MCF 10A (cell line): ENCODE measurements at regions of chr3 and their contacts with region 1.

Region 1: DNA sequence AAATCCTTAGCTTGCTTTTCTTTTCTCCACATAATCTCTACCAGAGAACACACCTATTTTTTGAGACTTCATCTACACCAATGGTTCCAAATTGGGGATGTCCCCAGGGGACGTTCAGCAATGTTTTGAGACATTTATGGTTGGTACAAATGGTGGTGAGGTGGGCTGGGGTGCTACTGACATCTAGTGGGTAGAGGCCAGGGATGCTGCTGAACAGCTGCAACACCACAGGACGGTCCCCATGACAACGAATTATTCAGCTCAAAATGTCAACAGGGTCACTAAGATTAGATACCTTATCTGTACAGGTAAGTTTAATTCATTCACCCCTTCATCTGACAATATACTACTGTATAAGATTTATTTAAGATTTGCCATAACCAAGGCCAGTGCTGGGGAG is 14.3 kb downstream of the GK5 start:
- DNase-seq: no peak
- H3K4me3 Mint-ChIP-seq: no peak overlapping the region
- H3K27ac Mint-ChIP-seq: peak overlapping the region; percentile 99
- H3K4me1 Mint-ChIP-seq: peaks cover 25% of the 10 kb centered on the region
- H3K27me3 Mint-ChIP-seq: no peaks in the 10 kb centered on the region
- CTCF ChIP-seq: peak; percentile 10

Region 2: DNA sequence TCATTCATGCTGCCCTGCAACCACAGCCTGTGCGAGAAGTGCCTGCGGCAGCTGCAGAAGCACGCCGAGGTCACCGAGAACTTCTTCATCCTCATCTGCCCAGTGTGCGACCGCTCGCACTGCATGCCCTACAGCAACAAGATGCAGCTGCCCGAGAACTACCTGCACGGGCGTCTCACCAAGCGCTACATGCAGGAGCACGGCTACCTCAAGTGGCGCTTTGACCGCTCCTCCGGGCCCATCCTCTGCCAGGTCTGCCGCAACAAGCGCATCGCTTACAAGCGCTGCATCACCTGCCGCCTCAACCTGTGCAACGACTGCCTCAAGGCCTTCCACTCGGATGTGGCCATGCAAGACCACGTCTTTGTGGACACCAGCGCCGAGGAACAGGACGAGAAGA is 1528.4 kb before region 1 on chr3:
- CTCF ChIA-PET with region 1: no interaction called
- POLR2A ChIA-PET with region 1: no interaction called
- intact Hi-C with region 1: no loop called
- DNase-seq: no peak
- H3K4me3 Mint-ChIP-seq: no peak overlapping the region
- H3K27ac Mint-ChIP-seq: no peak overlapping the region
- H3K4me1 Mint-ChIP-seq: no peaks in the 10 kb centered on the region
- H3K27me3 Mint-ChIP-seq: no peaks in the 10 kb centered on the region
- CTCF ChIP-seq: no peak

Region 3: GRCh38 chr3:142148792-142149672 is 62.0 kb before region 1 on chr3 and contains the start of gene TFDP2:
- CTCF ChIA-PET with region 1: no interaction called
- POLR2A ChIA-PET with region 1: interaction called, 11 read pairs
- intact Hi-C with region 1: no loop called
- DNase-seq: peak; percentile 90
- H3K4me3 Mint-ChIP-seq: peak within 1 kb of the TSS; percentile 80
- H3K27ac Mint-ChIP-seq: peak within 1 kb of the TSS; percentile 96
- H3K4me1 Mint-ChIP-seq: peaks cover 30% of the 10 kb centered on the region
- H3K27me3 Mint-ChIP-seq: no peaks in the 10 kb centered on the region
- CTCF ChIP-seq: no peak
- total RNA-seq, gene TFDP2: 38.4 and 43.2 TPM in 2 replicates

Region 4: GRCh38 chr3:142226484-142226883 is 15.4 kb after region 1 on chr3:
- CTCF ChIA-PET with region 1: interaction called, 7 read pairs
- POLR2A ChIA-PET with region 1: interaction called, 12 read pairs
- intact Hi-C with region 1: no loop called
- DNase-seq: no peak
- H3K4me3 Mint-ChIP-seq: peak overlapping the region; percentile 87
- H3K27ac Mint-ChIP-seq: no peak overlapping the region
- H3K4me1 Mint-ChIP-seq: peaks cover 13% of the 10 kb centered on the region
- H3K27me3 Mint-ChIP-seq: no peaks in the 10 kb centered on the region
- CTCF ChIP-seq: no peak